OCI-LY7 (cell line): ENCODE measurements at regions of chr2 and their contacts with region 1.

Region 1: DNA sequence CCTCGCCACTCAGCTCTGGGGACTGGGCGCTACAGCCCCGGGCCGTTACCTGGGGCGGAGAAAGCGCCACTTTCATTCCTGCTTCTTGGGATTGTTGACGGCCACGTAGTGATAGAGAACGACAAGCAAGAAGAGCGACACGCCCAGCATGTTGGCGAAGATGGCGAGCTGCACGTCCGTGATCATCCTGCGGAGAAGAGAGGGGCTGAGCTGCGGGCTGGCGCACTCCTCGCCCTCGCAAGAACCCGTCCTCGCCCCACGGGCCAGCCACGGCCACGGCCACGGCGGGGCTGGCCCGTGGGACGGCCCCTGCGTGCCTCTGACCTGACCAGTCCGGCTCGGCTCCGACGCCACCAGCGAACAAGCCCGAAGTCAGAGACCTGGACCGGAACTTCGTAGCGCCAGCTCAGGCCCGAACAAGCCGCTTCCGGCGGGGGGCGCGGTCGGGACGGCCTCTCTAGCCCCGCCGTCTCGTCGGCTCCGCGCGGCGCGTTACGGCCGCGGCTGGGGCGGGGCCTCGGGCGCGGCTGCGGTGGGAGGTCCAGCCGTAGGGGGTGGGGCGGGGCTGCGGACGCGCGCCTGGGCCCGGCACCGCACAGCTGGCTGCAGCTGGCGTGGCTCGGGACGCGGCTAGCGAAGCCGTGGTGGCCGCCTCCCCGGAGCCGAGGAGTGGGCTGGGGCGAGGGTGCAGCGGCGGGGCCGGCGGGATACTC is at the start of gene OST4:
- DNase-seq: peak; percentile 94
- H3K4me3 ChIP-seq: peak within 1 kb of the TSS; percentile 93
- H3K27ac ChIP-seq: peak within 1 kb of the TSS; percentile 53
- H3K4me1 ChIP-seq: peaks cover 56% of the 10 kb centered on the region
- CTCF ChIP-seq: peak; percentile 53
- total RNA-seq, gene OST4: 147 and 214 TPM in 2 replicates

Region 2: GRCh38 chr2:27003857-27004256 is 67.6 kb before region 1 on chr2:
- CTCF ChIA-PET with region 1: no interaction called
- POLR2A ChIA-PET with region 1: no interaction called
- intact Hi-C with region 1: no loop called
- DNase-seq: no peak
- H3K4me3 ChIP-seq: no peak overlapping the region
- H3K27ac ChIP-seq: no peak overlapping the region
- H3K4me1 ChIP-seq: no peaks in the 10 kb centered on the region
- CTCF ChIP-seq: no peak

Region 3: GRCh38 chr2:27032495-27033252 is 38.8 kb before region 1 on chr2 and contains the start of gene TMEM214:
- CTCF ChIA-PET with region 1: no interaction called
- POLR2A ChIA-PET with region 1: no interaction called
- intact Hi-C with region 1: loop called (anchors 2 kb)
- DNase-seq: peak; percentile 87
- H3K4me3 ChIP-seq: peak within 1 kb of the TSS; percentile 95
- H3K27ac ChIP-seq: peak within 1 kb of the TSS; percentile 15
- H3K4me1 ChIP-seq: peaks cover 16% of the 10 kb centered on the region
- CTCF ChIP-seq: no peak
- total RNA-seq, gene TMEM214: 32.0 and 32.6 TPM in 2 replicates